IMR-90 (cell line): ENCODE measurements at regions of chr3 and their contacts with region 1.

Region 1: DNA sequence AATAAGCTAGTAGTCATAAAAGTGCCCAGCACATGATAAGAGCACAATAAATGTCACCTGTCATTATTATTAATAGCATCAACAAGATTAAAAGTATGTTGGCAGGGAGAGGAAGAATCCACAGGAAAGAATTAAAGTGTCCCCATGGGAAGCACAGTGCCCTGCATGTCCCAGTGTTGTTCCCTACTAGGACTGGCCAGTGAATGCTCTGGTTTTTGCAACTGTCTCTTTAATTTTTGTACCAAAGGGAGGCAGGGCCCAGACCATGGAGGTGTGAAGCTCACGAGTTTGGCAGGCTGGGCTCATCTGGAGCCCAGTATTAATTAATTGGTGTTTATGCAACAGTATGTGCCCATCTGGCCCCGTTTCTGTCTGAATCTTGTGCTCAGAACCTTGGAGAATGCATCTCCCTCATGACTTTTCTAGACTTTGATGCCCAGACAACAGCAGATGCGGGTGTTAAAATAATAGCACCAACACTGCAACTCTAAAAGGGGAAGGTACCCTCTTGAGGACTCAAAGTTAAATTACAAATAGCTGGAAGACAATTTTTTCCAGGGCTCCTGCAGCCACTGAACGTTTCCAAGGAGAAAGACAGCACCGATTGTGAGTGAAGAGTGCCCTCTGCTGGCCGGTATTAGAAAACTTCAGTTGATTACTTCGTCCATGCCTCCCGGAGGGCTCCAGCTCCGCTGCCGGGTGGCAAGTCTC is 71.9 kb upstream of the SPATA12 start:
- DNase-seq: peak; percentile 71
- ATAC-seq: peak; percentile 76
- H3K4me3 ChIP-seq: no peak overlapping the region
- H3K27ac ChIP-seq: no peak overlapping the region
- H3K4me1 ChIP-seq: peaks cover 10% of the 10 kb centered on the region; the same call in 1 of the 2 replicates
- H3K27me3 ChIP-seq: peaks cover 18% of the 10 kb centered on the region
- CTCF ChIP-seq: peak; percentile 86
- POLR2A ChIP-seq: 0 out of 2 replicates have a peak, but pooled peaks have one; percentile 49
- RAD21 ChIP-seq: peak; percentile 95

Region 2: DNA sequence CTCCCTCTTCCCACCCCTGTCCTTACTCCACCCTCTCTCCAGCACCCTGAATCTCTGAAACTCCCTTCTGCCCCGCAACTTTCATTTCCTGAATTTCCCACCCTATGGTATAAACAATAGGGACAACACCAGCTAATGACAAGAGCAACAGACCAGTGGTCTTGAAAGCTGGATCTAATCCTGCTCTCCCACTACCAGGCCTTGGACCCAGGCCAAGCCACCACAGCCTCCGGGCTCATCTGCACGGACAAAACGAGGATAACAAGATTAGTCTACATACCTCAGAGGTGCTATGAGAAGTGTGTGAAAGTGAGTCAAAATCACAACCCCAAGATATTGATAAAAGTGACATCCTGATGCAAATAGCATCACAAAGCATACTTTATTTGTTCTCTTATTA is 648.9 kb before region 1 on chr3:
- CTCF ChIA-PET with region 1: no interaction called
- POLR2A ChIA-PET with region 1: no interaction called
- dilution Hi-C with region 1: no loop called
- in situ Hi-C with region 1: no loop called
- intact Hi-C with region 1: loop called (anchors 2 kb)
- DNase-seq: no peak
- ATAC-seq: no peak
- H3K4me3 ChIP-seq: no peak overlapping the region
- H3K27ac ChIP-seq: no peak overlapping the region
- H3K4me1 ChIP-seq: no peaks in the 10 kb centered on the region
- H3K27me3 ChIP-seq: no peaks in the 10 kb centered on the region; the same call in 1 of the 2 replicates
- CTCF ChIP-seq: no peak
- POLR2A ChIP-seq: no peak
- RAD21 ChIP-seq: no peak

Region 3: GRCh38 chr3:56556908-56557830 is 431.4 kb before region 1 on chr3 and contains the start of gene CCDC66:
- CTCF ChIA-PET with region 1: no interaction called
- POLR2A ChIA-PET with region 1: no interaction called
- dilution Hi-C with region 1: no loop called
- in situ Hi-C with region 1: no loop called
- intact Hi-C with region 1: loop called (anchors 10 kb)
- DNase-seq: peak; percentile 90
- ATAC-seq: peak; percentile 100
- H3K4me3 ChIP-seq: peak within 1 kb of the TSS; percentile 56
- H3K27ac ChIP-seq: peak within 1 kb of the TSS; percentile 67
- H3K4me1 ChIP-seq: no peaks in the 10 kb centered on the region
- H3K27me3 ChIP-seq: no peaks in the 10 kb centered on the region
- CTCF ChIP-seq: peak; percentile 60
- POLR2A ChIP-seq: peak; percentile 77; the same call in 1 of the 2 replicates
- RAD21 ChIP-seq: 0 out of 2 replicates have a peak, but pooled peaks have one; percentile 18
- total RNA-seq, gene CCDC66: 9.1 and 12.2 TPM in 2 replicates

Region 4: GRCh38 chr3:56801662-56802377 is 186.8 kb before region 1 on chr3 and contains the start of gene ARHGEF3:
- CTCF ChIA-PET with region 1: interaction called, 32 read pairs
- POLR2A ChIA-PET with region 1: no interaction called
- dilution Hi-C with region 1: no loop called
- in situ Hi-C with region 1: loop called (anchors 5 kb)
- intact Hi-C with region 1: loop called (anchors 1 kb)
- DNase-seq: peak; percentile 48
- ATAC-seq: peak; percentile 99
- H3K4me3 ChIP-seq: peak within 1 kb of the TSS; percentile 73
- H3K27ac ChIP-seq: no peak within 1 kb of the TSS
- H3K4me1 ChIP-seq: peaks cover 3% of the 10 kb centered on the region; the same call in 1 of the 2 replicates
- H3K27me3 ChIP-seq: peaks cover 5% of the 10 kb centered on the region; the same call in 1 of the 2 replicates
- CTCF ChIP-seq: peak; percentile 27
- POLR2A ChIP-seq: 0 out of 2 replicates have a peak, but pooled peaks have one; percentile 41
- RAD21 ChIP-seq: no peak
- total RNA-seq, gene ARHGEF3: 2.3 and 2.5 TPM in 2 replicates

Region 5: GRCh38 chr3:56855856-56856512 is 132.6 kb before region 1 on chr3:
- CTCF ChIA-PET with region 1: no interaction called
- POLR2A ChIA-PET with region 1: no interaction called
- dilution Hi-C with region 1: no loop called
- in situ Hi-C with region 1: no loop called
- intact Hi-C with region 1: loop called (anchors 5 kb)
- DNase-seq: no peak
- ATAC-seq: no peak; the same call in 1 of the 2 replicates
- H3K4me3 ChIP-seq: no peak overlapping the region
- H3K27ac ChIP-seq: no peak overlapping the region
- H3K4me1 ChIP-seq: no peaks in the 10 kb centered on the region
- H3K27me3 ChIP-seq: 0 out of 2 replicates have a peak, but pooled peaks cover 2% of the 10 kb centered on the region
- CTCF ChIP-seq: peak; percentile 39
- POLR2A ChIP-seq: no peak
- RAD21 ChIP-seq: peak; percentile 32; the same call in 1 of the 2 replicates